ENCODE measurements at regions of chr9 and their contacts with region 1.

Region 1: GRCh38 chr9:128863647-128864046 is 18.1 kb downstream of the KYAT1 start:
- DNase-seq: peak; percentile 89
- CTCF ChIP-seq: peak; percentile 97

Region 2: DNA sequence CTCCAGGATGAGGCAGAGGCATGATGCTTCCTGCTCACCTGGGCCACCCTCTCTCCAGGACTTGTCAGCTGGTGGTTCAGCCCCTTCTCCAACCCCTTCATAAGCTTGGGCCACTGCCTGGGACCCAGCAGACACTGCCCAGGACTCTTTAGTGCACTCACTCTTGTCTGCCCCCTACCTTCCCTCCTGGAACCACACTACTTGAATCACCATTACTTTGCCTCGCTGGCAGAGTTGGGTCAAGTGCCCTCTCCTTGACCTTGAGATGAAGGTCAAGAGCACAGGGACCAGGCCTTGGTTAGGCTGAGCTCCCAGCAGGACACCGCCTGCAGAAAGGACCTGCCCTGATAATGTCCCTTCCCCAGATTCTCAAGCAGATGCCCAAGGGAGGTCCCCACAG is 53.8 kb before region 1 on chr9:
- CTCF ChIA-PET with region 1: no interaction called
- POLR2A ChIA-PET with region 1: interaction called, 12 read pairs
- DNase-seq: no peak
- CTCF ChIP-seq: no peak

Region 3: GRCh38 chr9:128835246-128836210 is 28.1 kb before region 1 on chr9:
- CTCF ChIA-PET with region 1: no interaction called
- POLR2A ChIA-PET with region 1: no interaction called
- DNase-seq: no peak
- CTCF ChIP-seq: no peak

Region 4: DNA sequence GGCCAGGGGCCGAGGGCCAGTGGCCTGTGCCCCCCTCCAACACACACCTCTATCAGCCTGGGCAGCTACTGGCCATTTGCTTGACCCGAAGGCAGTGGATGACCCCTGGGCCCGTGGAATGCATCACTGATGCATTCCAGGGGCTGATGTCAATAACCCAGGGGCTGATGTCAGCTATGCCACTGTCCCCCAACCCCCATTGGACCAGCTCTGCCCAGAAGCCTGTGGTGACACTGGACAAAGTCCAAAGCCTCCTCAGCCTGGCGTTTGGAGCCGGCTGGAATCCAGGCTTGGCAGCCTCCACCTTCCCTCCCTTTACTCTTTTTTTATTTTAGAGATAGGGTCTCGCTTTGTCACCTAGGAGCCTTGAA is 12.1 kb after region 1 on chr9:
- CTCF ChIA-PET with region 1: interaction called, 50 read pairs
- POLR2A ChIA-PET with region 1: no interaction called
- DNase-seq: no peak
- CTCF ChIP-seq: no peak

Region 5: DNA sequence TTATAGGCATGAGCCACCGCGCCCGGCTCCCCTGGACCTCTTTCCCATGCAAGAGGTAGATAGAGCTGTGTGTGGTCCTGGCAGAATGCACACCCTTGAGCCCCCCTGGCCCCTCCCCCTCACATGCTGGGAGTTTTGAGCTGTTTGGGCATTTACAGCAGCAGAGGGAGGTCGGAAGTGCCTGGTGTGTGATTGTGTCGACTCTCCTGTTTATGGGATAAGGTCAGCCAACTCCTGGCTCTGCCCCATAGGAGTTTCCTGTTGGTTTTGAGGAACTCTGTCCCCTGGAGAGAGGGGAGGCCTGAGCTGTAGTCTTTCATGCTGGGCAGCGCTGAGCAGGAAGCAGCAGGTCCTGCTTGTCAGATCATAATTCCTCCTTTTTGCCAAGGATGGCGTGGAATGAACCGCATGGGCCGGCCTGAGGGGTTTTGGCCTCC is 24.3 kb after region 1 on chr9:
- CTCF ChIA-PET with region 1: interaction called, 10 read pairs
- POLR2A ChIA-PET with region 1: no interaction called
- DNase-seq: no peak
- CTCF ChIP-seq: no peak

Region 6: GRCh38 chr9:128921881-128922763 is 58.5 kb after region 1 on chr9:
- CTCF ChIA-PET with region 1: interaction called, 67 read pairs
- POLR2A ChIA-PET with region 1: no interaction called
- DNase-seq: peak; percentile 58
- CTCF ChIP-seq: no peak

Region 7: GRCh38 chr9:128927731-128928411 is 64.2 kb after region 1 on chr9:
- CTCF ChIA-PET with region 1: interaction called, 67 read pairs
- POLR2A ChIA-PET with region 1: no interaction called
- DNase-seq: peak; percentile 79
- CTCF ChIP-seq: peak; percentile 93

Measured in GM10248 (cell line).